ENCODE measurements at regions of chr5 and their contacts with region 1.

Region 1: DNA sequence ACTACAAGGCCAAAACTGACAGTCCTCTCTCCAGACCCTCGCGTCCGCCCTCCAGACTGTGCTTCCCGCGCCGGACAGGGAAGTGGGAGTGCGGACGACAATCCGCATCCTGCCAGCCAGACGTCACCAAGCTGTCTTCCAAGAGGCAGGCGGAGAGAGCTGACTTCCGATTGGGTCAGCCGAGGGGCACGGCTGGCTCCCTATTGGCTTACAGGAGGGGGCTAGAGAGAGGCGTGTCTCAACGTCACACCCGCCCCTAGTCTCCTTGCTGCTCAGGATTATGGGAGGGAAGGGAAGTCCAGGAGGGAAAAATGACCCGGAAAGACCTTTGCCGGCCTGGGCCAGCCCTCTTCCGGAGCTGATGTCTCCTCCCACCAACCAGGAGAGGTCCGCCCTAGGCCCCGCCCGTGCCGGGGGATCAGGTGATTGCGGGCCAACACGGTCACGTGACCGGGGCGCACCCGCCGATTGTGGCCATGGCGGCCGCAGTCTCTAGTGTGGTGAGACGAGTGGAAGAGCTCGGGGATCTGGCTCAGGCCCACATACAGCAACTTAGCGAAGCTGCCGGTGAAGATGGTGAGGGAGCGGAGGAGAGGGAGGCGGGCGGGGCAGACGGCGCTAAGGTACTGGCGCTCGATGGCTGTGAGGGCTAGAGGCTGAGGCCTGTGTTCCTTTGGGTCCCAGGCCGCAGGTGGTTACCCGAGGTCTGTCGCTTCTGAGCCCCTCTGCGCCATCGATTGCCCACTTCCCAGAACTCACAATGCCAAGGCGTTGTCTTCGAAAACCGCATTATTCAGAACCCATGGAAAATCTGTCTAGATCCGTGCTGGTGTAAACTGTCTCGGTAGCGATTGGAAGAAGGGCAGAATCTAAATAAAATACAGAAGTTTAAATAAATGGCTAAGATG is at the start of gene RIMOC1:
- DNase-seq: peak; percentile 98
- H3K4me3 Mint-ChIP-seq: peak within 1 kb of the TSS; percentile 97
- H3K27ac Mint-ChIP-seq: peak within 1 kb of the TSS; percentile 97
- H3K4me1 Mint-ChIP-seq: peaks cover 49% of the 10 kb centered on the region
- H3K27me3 Mint-ChIP-seq: no peaks in the 10 kb centered on the region
- total RNA-seq, gene RIMOC1: 26.6 and 28.7 TPM in 2 replicates

Region 2: DNA sequence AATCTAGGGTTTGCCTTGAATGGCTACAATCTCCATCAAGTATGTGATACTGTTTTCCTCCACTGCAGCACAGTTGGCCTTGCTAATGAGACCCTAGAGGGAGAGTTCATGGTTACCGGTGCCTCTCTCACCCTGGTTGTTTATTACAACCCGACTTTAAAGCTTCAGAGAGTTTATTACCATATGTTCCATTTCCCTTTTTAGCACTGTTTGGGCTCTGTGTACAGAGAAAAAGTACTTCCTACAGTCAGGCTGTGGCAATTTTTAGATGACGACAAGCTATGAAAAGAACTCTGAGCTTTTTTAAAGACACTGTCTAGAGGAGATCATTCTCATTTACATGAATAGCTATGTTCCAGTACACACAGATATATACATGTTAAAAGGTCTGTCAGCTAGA is 345.0 kb before region 1 on chr5:
- intact Hi-C with region 1: no loop called
- DNase-seq: no peak
- H3K4me3 Mint-ChIP-seq: no peak overlapping the region
- H3K27ac Mint-ChIP-seq: no peak overlapping the region
- H3K4me1 Mint-ChIP-seq: no peaks in the 10 kb centered on the region
- H3K27me3 Mint-ChIP-seq: no peaks in the 10 kb centered on the region

Region 3: DNA sequence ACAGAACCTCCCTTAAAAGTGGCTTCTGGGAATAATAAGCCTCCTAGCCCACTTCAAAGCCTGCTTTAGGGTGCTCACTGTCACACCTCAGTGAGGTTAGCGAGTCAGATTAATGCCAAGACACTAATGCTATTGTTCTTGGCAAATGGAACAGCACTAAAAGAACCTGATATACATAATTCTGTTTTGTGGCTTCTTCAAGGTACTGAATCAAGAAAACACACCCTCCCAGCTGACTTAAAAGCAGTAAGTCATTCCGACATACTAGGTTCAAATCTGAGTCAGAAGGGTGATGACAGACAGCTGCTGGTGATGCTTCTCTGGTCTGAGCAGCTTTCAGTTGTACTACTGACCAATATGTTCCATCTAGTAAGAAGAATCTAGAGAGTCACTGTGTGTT is 155.5 kb before region 1 on chr5:
- intact Hi-C with region 1: loop called (anchors 1 kb)
- DNase-seq: no peak
- H3K4me3 Mint-ChIP-seq: no peak overlapping the region
- H3K27ac Mint-ChIP-seq: peak overlapping the region; percentile 66
- H3K4me1 Mint-ChIP-seq: peaks cover 25% of the 10 kb centered on the region
- H3K27me3 Mint-ChIP-seq: no peaks in the 10 kb centered on the region

Region 4: GRCh38 chr5:41809128-41809527 is 95.0 kb before region 1 on chr5:
- intact Hi-C with region 1: no loop called
- DNase-seq: no peak
- H3K4me3 Mint-ChIP-seq: no peak overlapping the region
- H3K27ac Mint-ChIP-seq: peak overlapping the region; percentile 33
- H3K4me1 Mint-ChIP-seq: peaks cover 49% of the 10 kb centered on the region
- H3K27me3 Mint-ChIP-seq: no peaks in the 10 kb centered on the region

Region 5: GRCh38 chr5:41875121-41875520 is 29.0 kb before region 1 on chr5:
- intact Hi-C with region 1: loop called (anchors 1 kb)
- DNase-seq: no peak
- H3K4me3 Mint-ChIP-seq: no peak overlapping the region
- H3K27ac Mint-ChIP-seq: peak overlapping the region; percentile 54
- H3K4me1 Mint-ChIP-seq: peaks cover 44% of the 10 kb centered on the region
- H3K27me3 Mint-ChIP-seq: no peaks in the 10 kb centered on the region

Region 6: GRCh38 chr5:41918105-41918504 is 14.0 kb after region 1 on chr5:
- intact Hi-C with region 1: loop called (anchors 1 kb)
- DNase-seq: no peak
- H3K4me3 Mint-ChIP-seq: no peak overlapping the region
- H3K27ac Mint-ChIP-seq: no peak overlapping the region
- H3K4me1 Mint-ChIP-seq: peaks cover 33% of the 10 kb centered on the region
- H3K27me3 Mint-ChIP-seq: no peaks in the 10 kb centered on the region

Region 7: DNA sequence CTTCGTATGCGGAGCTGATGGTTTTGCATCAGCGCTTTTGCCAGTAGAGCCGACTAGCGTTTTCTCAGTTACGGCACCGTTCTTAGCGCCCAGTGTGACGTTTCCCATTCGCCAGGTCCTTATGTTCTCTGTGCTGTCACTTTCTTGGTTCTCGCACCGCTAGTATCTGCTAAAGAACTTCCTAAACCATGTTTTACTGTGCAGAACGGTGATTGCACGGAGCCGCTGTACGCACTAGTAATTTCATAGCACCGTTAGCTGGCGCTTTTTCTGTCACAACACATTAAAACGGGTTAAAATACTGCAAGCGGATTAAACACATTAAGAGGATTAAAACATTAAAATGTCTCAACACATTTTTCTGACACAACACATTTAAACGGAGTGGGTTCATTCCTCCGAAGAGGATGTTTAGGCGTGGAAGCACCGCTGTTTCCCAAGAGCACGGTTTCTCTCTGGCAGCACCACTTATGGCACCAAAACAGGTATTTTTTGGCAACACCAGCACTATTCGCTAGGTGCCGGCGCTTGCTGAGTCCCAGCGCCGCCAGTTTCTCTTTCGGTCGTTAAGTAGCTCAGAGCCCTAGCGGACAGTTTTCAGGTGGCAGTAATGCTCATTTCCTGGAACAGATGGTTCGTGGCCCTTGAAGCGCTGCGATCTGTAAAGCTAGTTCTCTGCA is 1115.6 kb after region 1 on chr5:
- intact Hi-C with region 1: loop called (anchors 10 kb)
- DNase-seq: peak; percentile 84
- H3K4me3 Mint-ChIP-seq: peak overlapping the region; percentile 96
- H3K27ac Mint-ChIP-seq: peak overlapping the region; percentile 99
- H3K4me1 Mint-ChIP-seq: peaks cover 38% of the 10 kb centered on the region
- H3K27me3 Mint-ChIP-seq: no peaks in the 10 kb centered on the region

Measured in activated T-helper 2 cell treated with anti-CD3 and anti-CD28 coated beads, Interferon-gamma antibody, Interleukin-2, Interleukin-4, amounts not matched to agents 10 μg/mL and 5 μg/mL and 100 μg/mL, durations not matched to agents 14 hours and 24 hours and 36 hours (primary cell).